ENCODE measurements at regions of chr12 and their contacts with region 1.

Region 1: GRCh38 chr12:4307593-4308333 is 13.2 kb upstream of the TIGAR start:
- DNase-seq: peak; percentile 2
- H3K4me3 ChIP-seq: no peak overlapping the region
- CTCF ChIP-seq: peak; percentile 74

Region 2: GRCh38 chr12:3641428-3642018 is 666.2 kb before region 1 on chr12:
- CTCF ChIA-PET with region 1: no interaction called
- POLR2A ChIA-PET with region 1: no interaction called
- DNase-seq: peak; percentile 45
- H3K4me3 ChIP-seq: no peak overlapping the region
- CTCF ChIP-seq: no peak

Region 3: DNA sequence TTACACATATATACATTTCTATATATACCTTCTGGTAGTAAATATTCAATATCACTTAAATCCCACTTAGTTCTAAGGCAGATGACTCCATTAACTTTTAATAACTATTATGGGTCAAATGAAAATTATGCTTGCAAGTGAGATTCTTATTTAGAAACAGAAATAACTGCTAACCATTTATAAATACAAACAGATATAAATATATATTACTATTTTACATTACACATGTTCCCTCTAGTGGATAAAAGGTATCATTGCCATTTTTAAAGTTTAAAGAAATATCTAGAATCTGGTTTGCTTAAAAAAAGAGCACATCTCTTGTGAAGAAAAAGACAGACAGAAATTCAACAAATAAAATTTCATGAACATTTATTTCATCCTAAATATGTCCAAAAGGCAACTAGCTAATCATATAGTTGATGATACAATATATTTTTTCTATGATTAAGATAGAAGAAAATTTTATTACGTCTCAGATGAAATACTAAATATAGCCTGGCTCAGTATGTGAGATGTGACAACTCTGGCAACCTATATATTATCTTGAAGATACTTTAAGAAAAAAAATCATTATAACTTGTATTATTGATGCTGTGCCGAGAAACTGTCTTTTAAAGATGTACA is 219.3 kb after region 1 on chr12:
- CTCF ChIA-PET with region 1: interaction called, 33 read pairs
- POLR2A ChIA-PET with region 1: no interaction called
- DNase-seq: no peak
- H3K4me3 ChIP-seq: no peak overlapping the region
- CTCF ChIP-seq: no peak

Measured in AG04449 (cell line).